BJ (cell line): ENCODE measurements at regions of chr15 and their contacts with region 1.

Region 1: GRCh38 chr15:42137431-42138261 is 18.8 kb downstream of the PLA2G4F start:
- DNase-seq: peak; percentile 2
- H3K4me3 ChIP-seq: no peak overlapping the region
- H3K27me3 ChIP-seq: peaks cover 11% of the 10 kb centered on the region
- CTCF ChIP-seq: peak; percentile 63

Region 2: GRCh38 chr15:42065033-42065432 is 72.6 kb before region 1 on chr15:
- CTCF ChIA-PET with region 1: interaction called, 18 read pairs
- POLR2A ChIA-PET with region 1: no interaction called
- DNase-seq: no peak
- H3K4me3 ChIP-seq: no peak overlapping the region
- H3K27me3 ChIP-seq: peaks cover 18% of the 10 kb centered on the region
- CTCF ChIP-seq: no peak

Region 3: GRCh38 chr15:42084460-42085235 is 53.0 kb before region 1 on chr15:
- CTCF ChIA-PET with region 1: interaction called, 52 read pairs
- POLR2A ChIA-PET with region 1: no interaction called
- DNase-seq: no peak
- H3K4me3 ChIP-seq: no peak overlapping the region
- H3K27me3 ChIP-seq: peaks cover 37% of the 10 kb centered on the region
- CTCF ChIP-seq: peak; percentile 93

Region 4: GRCh38 chr15:42121682-42122081 is 16.0 kb before region 1 on chr15:
- CTCF ChIA-PET with region 1: interaction called, 12 read pairs
- POLR2A ChIA-PET with region 1: no interaction called
- DNase-seq: no peak
- H3K4me3 ChIP-seq: no peak overlapping the region
- H3K27me3 ChIP-seq: peaks cover 28% of the 10 kb centered on the region
- CTCF ChIP-seq: no peak

Region 5: DNA sequence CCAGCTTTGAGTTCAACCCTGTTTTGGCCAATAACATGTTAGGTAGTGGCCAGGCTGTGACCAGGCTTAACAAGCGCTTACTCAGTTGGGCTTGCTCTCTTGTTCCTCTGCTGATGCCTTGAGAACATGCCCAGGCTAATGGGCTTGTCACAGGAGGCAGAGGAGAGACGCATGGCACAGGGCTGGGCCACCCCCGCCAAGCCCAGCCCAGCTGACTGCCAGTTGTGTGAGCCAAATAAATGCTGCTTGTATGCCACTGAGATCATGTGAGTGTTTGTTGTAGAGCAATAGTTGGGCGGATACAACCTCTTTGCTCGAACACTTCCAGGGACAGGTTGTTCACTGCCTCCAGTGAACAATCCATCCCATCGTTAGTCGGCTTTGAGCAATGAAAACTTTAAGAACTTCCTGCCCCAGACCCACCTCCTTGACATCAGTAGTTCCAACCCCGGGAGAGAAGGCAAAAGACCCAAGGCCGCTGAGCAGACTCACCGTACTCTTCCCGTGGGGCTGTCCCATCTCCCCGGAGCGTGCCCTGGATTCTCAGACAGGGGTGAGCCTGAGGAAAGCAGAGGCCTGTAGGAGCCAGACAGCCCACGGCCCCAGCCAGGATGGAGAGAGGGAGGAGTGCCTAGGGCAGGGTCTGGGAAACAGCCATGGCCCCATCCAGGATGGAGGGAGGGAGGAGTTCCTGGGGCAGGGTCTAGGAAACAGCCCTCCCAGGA is 14.7 kb after region 1 on chr15:
- CTCF ChIA-PET with region 1: interaction called, 31 read pairs
- POLR2A ChIA-PET with region 1: no interaction called
- DNase-seq: no peak
- H3K4me3 ChIP-seq: no peak overlapping the region
- H3K27me3 ChIP-seq: peaks cover 3% of the 10 kb centered on the region; the same call in 1 of the 2 replicates
- CTCF ChIP-seq: no peak